ENCODE measurements at regions of chr2 and their contacts with region 1.

Region 1: GRCh38 chr2:59182249-59182648 is 941.1 kb upstream of the FANCL start:
- DNase-seq: peak; percentile 52
- H3K4me3 ChIP-seq: no peak overlapping the region
- H3K27ac ChIP-seq: no peak overlapping the region
- H3K4me1 ChIP-seq: no peaks in the 10 kb centered on the region
- H3K27me3 ChIP-seq: no peaks in the 10 kb centered on the region
- CTCF ChIP-seq: peak; percentile 43
- EP300 ChIP-seq: no peak
- RAD21 ChIP-seq: peak; percentile 61

Region 2: GRCh38 chr2:58762176-58762781 is 420.0 kb before region 1 on chr2:
- CTCF ChIA-PET with region 1: interaction called, 15 read pairs
- POLR2A ChIA-PET with region 1: no interaction called
- DNase-seq: peak; percentile 29
- H3K4me3 ChIP-seq: peak overlapping the region in 1 of 2 experiments; percentile 27; a peak in 1 of 4 replicates
- H3K27ac ChIP-seq: no peak overlapping the region
- H3K4me1 ChIP-seq: peaks cover 0 to 7% of the 10 kb centered on the region in 2 experiments; a peak in 2 of 4 replicates
- H3K27me3 ChIP-seq: no peaks in the 10 kb centered on the region
- CTCF ChIP-seq: peak; percentile 68
- EP300 ChIP-seq: no peak
- RAD21 ChIP-seq: peak; percentile 93

Measured in SK-N-SH (cell line).